ENCODE measurements at regions of chr3 and their contacts with region 1.

Region 1: GRCh38 chr3:15205934-15206661 is at the start of gene CAPN7:
- DNase-seq: peak; percentile 94 to 95 (median 95)
- H3K4me3 ChIP-seq: peak within 1 kb of the TSS; percentile 84 to 98 (median 90)
- H3K4me3 Mint-ChIP-seq: peak within 1 kb of the TSS; percentile 83 to 91
- H3K27ac ChIP-seq: peak within 1 kb of the TSS; percentile 78 to 95
- H3K27ac Mint-ChIP-seq: peak within 1 kb of the TSS; percentile 88 to 96 (median 93)
- H3K4me1 ChIP-seq: peaks cover 20 to 27% of the 10 kb centered on the region in 2 donors
- H3K4me1 Mint-ChIP-seq: peaks cover 22% of the 10 kb centered on the region
- H3K27me3 ChIP-seq: no peaks in the 10 kb centered on the region
- H3K27me3 Mint-ChIP-seq: peaks cover 0 to 2% (median 0%) of the 10 kb centered on the region in 3 donors
- CTCF ChIP-seq: no peak
- polyA plus RNA-seq, gene CAPN7: 11.7 to 20.8 (median 14.7) TPM

Region 2: GRCh38 chr3:15108082-15108545 is 98.0 kb before region 1 on chr3:
- intact Hi-C with region 1: loop called in 1 of 2 experiments (anchors 10 kb)
- DNase-seq: peak; percentile 62 to 74 (median 68)
- H3K4me3 ChIP-seq: no peak overlapping the region
- H3K4me3 Mint-ChIP-seq: peak overlapping the region in 1 of 2 donors; percentile 46
- H3K27ac ChIP-seq: no peak overlapping the region
- H3K27ac Mint-ChIP-seq: peak overlapping the region in 1 of 7 donors; percentile 66
- H3K4me1 ChIP-seq: peaks cover 14 to 16% of the 10 kb centered on the region in 2 donors
- H3K4me1 Mint-ChIP-seq: peaks cover 15% of the 10 kb centered on the region
- H3K27me3 ChIP-seq: no peaks in the 10 kb centered on the region
- H3K27me3 Mint-ChIP-seq: peaks cover 2 to 12% (median 2%) of the 10 kb centered on the region in 3 donors
- CTCF ChIP-seq: peak; percentile 95

Region 3: GRCh38 chr3:15557511-15557946 is 351.4 kb after region 1 on chr3:
- intact Hi-C with region 1: loop called (anchors 2 to 10 kb)
- DNase-seq: peak; percentile 64 to 80 (median 68)
- H3K4me3 ChIP-seq: no peak overlapping the region
- H3K4me3 Mint-ChIP-seq: peak overlapping the region in 1 of 2 donors; percentile 30
- H3K27ac ChIP-seq: peak overlapping the region in 1 of 2 donors; percentile 91
- H3K27ac Mint-ChIP-seq: peak overlapping the region; percentile 92 to 98 (median 97)
- H3K4me1 ChIP-seq: peaks cover 30 to 33% of the 10 kb centered on the region in 2 donors
- H3K4me1 Mint-ChIP-seq: peaks cover 29% of the 10 kb centered on the region
- H3K27me3 ChIP-seq: no peaks in the 10 kb centered on the region
- H3K27me3 Mint-ChIP-seq: peaks cover 0 to 2% (median 0%) of the 10 kb centered on the region in 3 donors
- CTCF ChIP-seq: peak; percentile 92

Region 4: GRCh38 chr3:15601397-15602145 is 395.5 kb after region 1 on chr3 and contains the starts of genes BTD and HACL1:
- intact Hi-C with region 1: loop called in 1 of 2 experiments (anchors 5 kb)
- DNase-seq: peak; percentile 95 to 98 (median 96)
- H3K4me3 ChIP-seq: peak within 1 kb of the TSS; percentile 61 to 91 (median 88)
- H3K4me3 Mint-ChIP-seq: peak within 1 kb of the TSS; percentile 96 to 98
- H3K27ac ChIP-seq: peak within 1 kb of the TSS; percentile 69 to 96
- H3K27ac Mint-ChIP-seq: peak within 1 kb of the TSS; percentile 94 to 100 (median 99)
- H3K4me1 ChIP-seq: peaks cover 16 to 20% of the 10 kb centered on the region in 2 donors
- H3K4me1 Mint-ChIP-seq: peaks cover 17% of the 10 kb centered on the region
- H3K27me3 ChIP-seq: no peaks in the 10 kb centered on the region
- H3K27me3 Mint-ChIP-seq: no peaks in the 10 kb centered on the region
- CTCF ChIP-seq: peak; percentile 27
- polyA plus RNA-seq, gene BTD: 13.2 to 24.0 (median 19.3) TPM
- polyA plus RNA-seq, gene HACL1: 12.3 to 27.2 (median 22.3) TPM